CD8-positive, alpha-beta T cell (primary cell): ENCODE measurements at regions of chr4 and their contacts with region 1.

Region 1: DNA sequence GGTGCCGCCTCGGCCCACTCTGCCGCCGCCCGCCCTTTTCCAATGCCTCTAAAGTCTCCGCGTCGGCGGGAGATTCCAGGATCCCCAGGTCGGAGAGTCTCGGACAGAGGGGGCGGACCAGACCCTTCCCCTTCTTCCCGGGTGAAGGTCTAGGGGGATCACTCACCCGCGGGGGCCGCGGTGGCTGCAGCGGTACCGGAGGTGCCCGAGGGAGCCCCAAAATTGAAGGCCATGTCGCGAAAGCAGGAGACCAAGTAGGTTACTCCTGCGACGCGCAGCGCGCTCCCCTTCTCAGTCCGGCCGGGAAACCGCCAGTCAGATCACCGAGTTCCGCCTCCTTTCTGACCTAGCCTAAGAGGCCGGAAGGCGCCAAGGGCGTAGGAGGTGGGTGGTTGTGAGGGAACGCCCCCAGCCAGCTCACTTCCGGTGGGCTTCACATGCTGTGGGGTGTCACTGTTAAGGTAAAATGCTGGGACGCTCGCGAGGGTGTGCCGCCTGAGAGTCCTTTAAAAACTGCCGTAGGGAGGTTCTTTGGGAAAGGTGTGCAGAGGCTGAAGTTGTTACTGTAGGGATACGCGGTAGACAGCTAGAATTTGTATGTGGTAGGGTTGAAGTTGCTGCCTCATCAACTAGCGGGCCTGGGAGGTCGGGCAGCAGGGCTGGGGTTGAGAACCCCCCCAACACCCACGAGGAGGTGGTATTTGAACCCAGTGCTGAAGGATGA is at the start of gene NUP54:
- DNase-seq: peak; percentile 91 to 97 (median 95)
- ATAC-seq: peak; percentile 98
- H3K4me3 ChIP-seq: peak within 1 kb of the TSS; percentile 66 to 99
- H3K4me3 Mint-ChIP-seq: peak within 1 kb of the TSS; percentile 96
- H3K27ac ChIP-seq: peak within 1 kb of the TSS; percentile 90 to 93
- H3K27ac Mint-ChIP-seq: peak within 1 kb of the TSS; percentile 96
- H3K4me1 ChIP-seq: peaks cover 29% of the 10 kb centered on the region
- H3K4me1 Mint-ChIP-seq: peaks cover 45% of the 10 kb centered on the region
- H3K27me3 ChIP-seq: no peaks in the 10 kb centered on the region
- H3K27me3 Mint-ChIP-seq: no peaks in the 10 kb centered on the region
- CTCF ChIP-seq: no peak
- total RNA-seq, gene NUP54: 95.7 to 103 TPM

Region 2: DNA sequence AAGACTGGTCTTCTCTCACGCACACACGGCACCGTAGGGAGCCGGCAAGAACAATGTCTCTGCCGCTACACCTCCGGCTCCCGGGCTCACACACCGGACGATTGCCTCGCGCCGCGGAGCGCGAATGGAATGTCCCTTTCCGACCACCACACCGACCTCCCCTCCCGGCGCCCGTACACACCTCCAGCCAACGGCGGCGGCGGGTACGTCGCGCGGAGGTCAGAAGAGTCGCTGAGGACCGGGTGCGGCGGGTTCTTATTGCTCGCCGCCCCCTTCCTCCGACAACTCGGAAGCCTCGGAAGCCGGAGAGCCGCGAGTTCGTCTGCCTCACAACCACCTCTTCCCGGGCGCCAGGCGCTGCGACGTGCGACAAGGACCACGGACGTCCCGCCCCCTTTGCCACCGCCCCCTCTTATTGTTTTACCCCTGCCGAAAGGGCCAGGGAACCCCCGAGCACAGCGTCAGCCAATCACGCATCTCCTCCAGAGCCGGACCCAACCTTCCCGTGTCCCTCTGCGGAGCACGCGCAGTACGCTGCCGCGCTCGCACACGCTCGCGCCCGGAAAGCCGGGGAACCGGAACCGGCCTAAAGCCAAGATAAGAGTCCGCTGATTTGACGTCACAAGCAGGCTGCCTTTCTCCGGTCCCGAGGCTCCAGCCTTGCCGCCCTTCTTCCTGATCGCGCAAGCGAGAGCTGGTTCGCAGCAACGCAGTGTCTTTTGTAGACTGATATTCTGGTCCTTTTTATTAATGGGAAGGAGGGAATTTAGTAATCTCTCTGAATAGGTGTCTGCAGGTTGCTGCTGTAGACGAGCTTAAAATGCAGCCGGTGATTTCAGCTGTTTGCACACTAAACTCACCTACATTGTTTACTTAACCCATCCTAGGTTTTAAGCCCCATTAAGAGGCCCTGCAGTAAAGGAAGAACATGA is 475.0 kb before region 1 on chr4 and contains the start of gene G3BP2:
- CTCF ChIA-PET with region 1: no interaction called
- POLR2A ChIA-PET with region 1: no interaction called
- intact Hi-C with region 1: loop called (anchors 5 kb)
- DNase-seq: peak; percentile 96 to 100 (median 97)
- ATAC-seq: peak; percentile 92
- H3K4me3 ChIP-seq: peak within 1 kb of the TSS; percentile 96 to 100
- H3K4me3 Mint-ChIP-seq: peak within 1 kb of the TSS; percentile 99
- H3K27ac ChIP-seq: peak within 1 kb of the TSS; percentile 94 to 99
- H3K27ac Mint-ChIP-seq: peak within 1 kb of the TSS; percentile 98
- H3K4me1 ChIP-seq: peaks cover 45% of the 10 kb centered on the region
- H3K4me1 Mint-ChIP-seq: peaks cover 42% of the 10 kb centered on the region
- H3K27me3 ChIP-seq: no peaks in the 10 kb centered on the region
- H3K27me3 Mint-ChIP-seq: no peaks in the 10 kb centered on the region
- CTCF ChIP-seq: no peak
- total RNA-seq, gene G3BP2: 410 TPM

Region 3: DNA sequence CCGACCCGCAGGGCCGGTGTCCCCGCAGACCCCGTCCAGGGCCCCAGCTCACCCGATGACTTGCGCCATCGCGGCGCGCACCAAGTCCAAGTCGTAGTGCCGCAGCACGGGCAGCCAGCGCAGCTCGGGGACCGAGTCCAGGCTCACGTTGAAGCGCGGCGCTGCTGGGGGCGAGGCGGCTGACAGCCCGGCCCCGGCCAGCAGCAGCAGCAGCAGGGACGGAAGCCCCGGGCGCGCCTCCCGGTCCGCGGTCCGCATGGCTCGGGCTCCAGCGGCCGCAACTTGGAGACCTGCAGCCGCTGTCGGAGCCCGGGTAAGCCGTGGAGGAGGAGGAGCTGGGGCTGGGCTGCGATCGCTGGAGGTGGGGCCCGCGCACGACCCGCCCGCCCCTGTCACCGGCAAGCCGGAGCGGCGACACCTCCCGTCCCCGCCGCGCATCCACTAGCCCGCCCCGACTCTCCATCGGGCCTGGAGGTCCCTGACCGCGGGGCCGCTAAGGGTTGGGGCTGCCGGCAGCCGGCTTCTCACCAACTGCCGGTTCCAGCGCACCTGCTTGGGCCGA is 207.5 kb before region 1 on chr4 and contains the start of gene NAAA:
- CTCF ChIA-PET with region 1: no interaction called
- POLR2A ChIA-PET with region 1: interaction called, 6 read pairs
- intact Hi-C with region 1: loop called (anchors 1 to 2 kb)
- DNase-seq: peak; percentile 44 to 92 (median 72)
- ATAC-seq: peak; percentile 79
- H3K4me3 ChIP-seq: peak within 1 kb of the TSS; percentile 71 to 85
- H3K4me3 Mint-ChIP-seq: peak within 1 kb of the TSS; percentile 95
- H3K27ac ChIP-seq: peak within 1 kb of the TSS; percentile 77 to 88
- H3K27ac Mint-ChIP-seq: peak within 1 kb of the TSS; percentile 95
- H3K4me1 ChIP-seq: peaks cover 5% of the 10 kb centered on the region
- H3K4me1 Mint-ChIP-seq: peaks cover 26% of the 10 kb centered on the region
- H3K27me3 ChIP-seq: no peaks in the 10 kb centered on the region
- H3K27me3 Mint-ChIP-seq: no peaks in the 10 kb centered on the region
- CTCF ChIP-seq: no peak
- total RNA-seq, gene NAAA: 26.1 to 30.4 TPM

Region 4: GRCh38 chr4:76055016-76055415 is 93.3 kb before region 1 on chr4:
- CTCF ChIA-PET with region 1: no interaction called
- POLR2A ChIA-PET with region 1: no interaction called
- intact Hi-C with region 1: no loop called
- DNase-seq: no peak
- ATAC-seq: no peak
- H3K4me3 ChIP-seq: no peak overlapping the region
- H3K4me3 Mint-ChIP-seq: no peak overlapping the region
- H3K27ac ChIP-seq: no peak overlapping the region
- H3K27ac Mint-ChIP-seq: no peak overlapping the region
- H3K4me1 ChIP-seq: no peaks in the 10 kb centered on the region
- H3K4me1 Mint-ChIP-seq: no peaks in the 10 kb centered on the region
- H3K27me3 ChIP-seq: no peaks in the 10 kb centered on the region
- H3K27me3 Mint-ChIP-seq: peaks cover 17% of the 10 kb centered on the region
- CTCF ChIP-seq: no peak

Region 5: GRCh38 chr4:76213415-76214176 is 65.3 kb after region 1 on chr4 and contains the start of gene SCARB2:
- CTCF ChIA-PET with region 1: no interaction called
- POLR2A ChIA-PET with region 1: interaction called, 16 read pairs
- intact Hi-C with region 1: loop called (anchors 1 to 2 kb)
- DNase-seq: peak; percentile 44 to 91 (median 73)
- ATAC-seq: peak; percentile 64
- H3K4me3 ChIP-seq: peak within 1 kb of the TSS; percentile 71 to 75
- H3K4me3 Mint-ChIP-seq: peak within 1 kb of the TSS; percentile 89
- H3K27ac ChIP-seq: peak within 1 kb of the TSS; percentile 85
- H3K27ac Mint-ChIP-seq: peak within 1 kb of the TSS; percentile 95
- H3K4me1 ChIP-seq: peaks cover 29% of the 10 kb centered on the region
- H3K4me1 Mint-ChIP-seq: peaks cover 59% of the 10 kb centered on the region
- H3K27me3 ChIP-seq: no peaks in the 10 kb centered on the region
- H3K27me3 Mint-ChIP-seq: no peaks in the 10 kb centered on the region
- CTCF ChIP-seq: no peak
- total RNA-seq, gene SCARB2: 33.3 to 34.4 TPM

Region 6: GRCh38 chr4:77065382-77065781 is 917.1 kb after region 1 on chr4:
- CTCF ChIA-PET with region 1: no interaction called
- POLR2A ChIA-PET with region 1: no interaction called
- intact Hi-C with region 1: loop called in 1 of 2 experiments (anchors 10 kb)
- DNase-seq: no peak
- ATAC-seq: no peak
- H3K4me3 ChIP-seq: no peak overlapping the region
- H3K4me3 Mint-ChIP-seq: no peak overlapping the region
- H3K27ac ChIP-seq: no peak overlapping the region
- H3K27ac Mint-ChIP-seq: peak overlapping the region; percentile 22
- H3K4me1 ChIP-seq: peaks cover 16% of the 10 kb centered on the region
- H3K4me1 Mint-ChIP-seq: peaks cover 45% of the 10 kb centered on the region
- H3K27me3 ChIP-seq: no peaks in the 10 kb centered on the region
- H3K27me3 Mint-ChIP-seq: no peaks in the 10 kb centered on the region
- CTCF ChIP-seq: no peak